Activated CD4-positive, alpha-beta memory T cell treated with anti-CD3 and anti-CD28 coated beads for 36 hours (primary cell): ENCODE measurements at regions of chr14 and their contacts with region 1.

Region 1: DNA sequence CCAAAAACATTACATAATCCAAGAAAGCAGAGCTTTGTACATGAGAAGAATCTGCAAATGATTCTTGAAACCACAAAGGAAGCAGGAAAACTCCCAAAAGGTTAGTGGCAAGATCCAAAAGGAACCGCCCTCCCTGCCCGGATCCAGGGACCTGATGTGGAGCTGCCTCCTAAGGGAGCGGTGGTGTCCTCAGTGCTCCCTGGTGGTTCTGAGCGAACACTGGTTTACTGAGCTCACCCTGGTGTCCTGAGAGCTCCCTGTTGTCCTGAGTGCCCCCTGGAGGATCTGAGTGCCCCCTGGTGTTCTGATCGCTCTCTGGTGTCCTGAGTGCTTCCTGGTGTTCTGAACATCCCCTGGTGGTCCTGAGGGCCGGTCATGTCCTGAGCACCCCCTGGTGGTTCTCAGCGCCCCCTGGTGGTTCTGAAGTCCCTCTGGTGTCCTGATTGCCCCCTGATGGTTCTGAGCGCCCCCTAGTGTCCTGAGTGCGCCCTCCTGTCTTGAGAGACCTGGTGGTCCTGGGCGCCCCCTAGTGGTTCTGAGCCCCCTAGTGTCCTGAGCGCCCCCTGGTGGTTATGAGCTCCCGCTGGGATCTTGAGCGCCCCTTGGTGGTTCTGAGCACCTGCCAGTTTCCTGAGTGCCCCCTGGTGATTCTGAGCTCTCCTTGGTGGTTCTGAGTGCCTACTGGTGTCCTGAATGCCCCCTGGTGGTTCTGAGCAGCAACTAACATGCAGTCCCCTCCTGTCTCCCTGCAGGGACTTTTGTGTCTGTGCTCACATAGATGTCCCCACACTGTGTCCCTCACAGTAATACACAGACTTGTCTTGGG is 891.1 kb downstream of the TMEM121 start:
- DNase-seq: peak; percentile 97
- H3K4me3 Mint-ChIP-seq: no peak overlapping the region
- H3K27ac Mint-ChIP-seq: no peak overlapping the region
- H3K4me1 Mint-ChIP-seq: peaks cover 8% of the 10 kb centered on the region
- H3K27me3 Mint-ChIP-seq: peaks cover 4% of the 10 kb centered on the region

Region 2: GRCh38 chr14:105690692-105691091 is 726.7 kb before region 1 on chr14:
- CTCF ChIA-PET with region 1: no interaction called
- POLR2A ChIA-PET with region 1: no interaction called
- intact Hi-C with region 1: no loop called
- DNase-seq: no peak
- H3K4me3 Mint-ChIP-seq: no peak overlapping the region
- H3K27ac Mint-ChIP-seq: no peak overlapping the region
- H3K4me1 Mint-ChIP-seq: peaks cover 4% of the 10 kb centered on the region
- H3K27me3 Mint-ChIP-seq: peaks cover 8% of the 10 kb centered on the region

Region 3: GRCh38 chr14:106308839-106309389 is 108.5 kb before region 1 on chr14:
- CTCF ChIA-PET with region 1: interaction called, 79 read pairs
- POLR2A ChIA-PET with region 1: no interaction called
- intact Hi-C with region 1: loop called (anchors 2 kb)
- DNase-seq: peak; percentile 97
- H3K4me3 Mint-ChIP-seq: no peak overlapping the region
- H3K27ac Mint-ChIP-seq: no peak overlapping the region
- H3K4me1 Mint-ChIP-seq: no peaks in the 10 kb centered on the region
- H3K27me3 Mint-ChIP-seq: peaks cover 10% of the 10 kb centered on the region

Region 4: DNA sequence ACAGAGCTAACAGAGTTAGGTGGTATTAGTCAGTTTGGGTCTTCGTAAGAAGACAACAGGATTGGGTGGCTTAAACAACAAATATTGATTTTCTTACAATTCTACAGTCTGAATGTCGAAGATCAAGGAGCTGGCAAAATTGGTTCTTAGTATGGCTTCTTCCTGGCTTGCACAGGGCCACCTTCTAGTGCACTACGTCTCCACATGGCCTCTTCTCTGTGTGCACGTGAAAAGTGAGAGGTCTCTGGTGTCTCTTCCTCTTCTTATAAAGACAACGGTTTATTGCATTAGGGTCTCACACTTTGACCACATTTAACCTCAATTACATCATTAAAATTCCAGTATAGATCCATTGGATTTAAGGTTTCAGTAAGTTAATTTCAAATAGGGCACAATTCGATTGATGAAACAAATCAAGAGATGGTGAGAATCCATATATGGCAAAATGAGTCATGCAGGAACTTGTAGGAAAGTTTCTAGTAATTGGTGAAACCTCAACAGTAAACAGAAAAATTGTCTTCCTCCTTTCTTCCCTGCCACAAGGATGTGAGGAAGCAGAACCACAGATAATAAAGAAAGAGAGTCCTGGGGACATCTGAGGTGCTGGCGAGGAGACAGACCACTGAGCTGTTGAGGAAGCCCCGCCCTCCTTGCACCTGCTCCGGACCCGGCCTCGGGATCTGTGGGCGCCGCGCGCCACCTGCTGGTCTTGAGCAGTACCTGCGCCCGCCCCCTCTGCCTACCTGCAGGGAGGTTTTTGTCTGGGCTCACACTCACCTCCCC is 44.4 kb before region 1 on chr14:
- CTCF ChIA-PET with region 1: interaction called, 220 read pairs
- POLR2A ChIA-PET with region 1: interaction called, 3 read pairs
- intact Hi-C with region 1: loop called (anchors 1 kb)
- DNase-seq: peak; percentile 90
- H3K4me3 Mint-ChIP-seq: peak overlapping the region; percentile 56
- H3K27ac Mint-ChIP-seq: peak overlapping the region; percentile 21
- H3K4me1 Mint-ChIP-seq: peaks cover 21% of the 10 kb centered on the region
- H3K27me3 Mint-ChIP-seq: peaks cover 12% of the 10 kb centered on the region

Region 5: GRCh38 chr14:106442857-106443256 is 25.4 kb after region 1 on chr14:
- CTCF ChIA-PET with region 1: interaction called, 83 read pairs
- POLR2A ChIA-PET with region 1: no interaction called
- intact Hi-C with region 1: no loop called
- DNase-seq: peak; percentile 61
- H3K4me3 Mint-ChIP-seq: no peak overlapping the region
- H3K27ac Mint-ChIP-seq: no peak overlapping the region
- H3K4me1 Mint-ChIP-seq: no peaks in the 10 kb centered on the region
- H3K27me3 Mint-ChIP-seq: peaks cover 35% of the 10 kb centered on the region

Region 6: DNA sequence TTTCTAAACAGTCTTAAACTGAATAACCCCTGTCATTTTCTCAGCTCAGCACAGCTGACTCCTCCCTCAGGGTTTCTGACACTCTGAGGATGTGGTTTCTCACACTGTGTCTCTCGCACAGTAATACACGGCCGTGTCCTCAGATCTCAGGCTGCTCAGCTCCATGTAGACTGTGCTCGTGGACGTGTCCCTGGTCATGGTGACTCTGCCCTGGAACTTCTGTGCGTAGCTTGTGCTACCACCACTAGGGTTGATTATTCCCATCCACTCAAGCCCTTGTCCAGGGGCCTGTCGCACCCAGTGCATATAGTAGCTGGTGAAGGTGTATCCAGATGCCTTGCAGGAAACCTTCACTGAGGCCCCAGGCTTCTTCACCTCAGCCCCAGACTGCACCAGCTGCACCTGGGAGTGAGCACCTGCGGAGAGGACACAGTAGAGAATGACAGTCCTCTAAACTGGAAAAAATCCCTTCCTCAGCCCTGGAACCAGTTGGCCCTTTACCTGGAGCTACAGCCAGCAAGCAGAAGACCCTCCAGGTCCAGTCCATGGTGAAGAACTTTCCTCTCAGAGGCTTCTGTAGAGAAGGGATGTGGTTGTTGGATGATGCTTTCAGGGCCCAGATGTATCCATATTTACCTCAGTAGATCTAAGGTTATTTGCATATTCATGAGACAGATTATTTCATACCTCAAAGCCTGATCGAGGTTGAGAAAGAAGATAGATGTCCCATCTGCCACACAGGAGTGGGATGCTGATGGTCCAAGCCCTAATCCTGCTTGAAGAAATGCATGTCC is 93.8 kb after region 1 on chr14:
- CTCF ChIA-PET with region 1: interaction called, 48 read pairs
- POLR2A ChIA-PET with region 1: no interaction called
- intact Hi-C with region 1: no loop called
- DNase-seq: peak; percentile 70
- H3K4me3 Mint-ChIP-seq: no peak overlapping the region
- H3K27ac Mint-ChIP-seq: peak overlapping the region; percentile 29
- H3K4me1 Mint-ChIP-seq: peaks cover 72% of the 10 kb centered on the region
- H3K27me3 Mint-ChIP-seq: no peaks in the 10 kb centered on the region

Region 7: DNA sequence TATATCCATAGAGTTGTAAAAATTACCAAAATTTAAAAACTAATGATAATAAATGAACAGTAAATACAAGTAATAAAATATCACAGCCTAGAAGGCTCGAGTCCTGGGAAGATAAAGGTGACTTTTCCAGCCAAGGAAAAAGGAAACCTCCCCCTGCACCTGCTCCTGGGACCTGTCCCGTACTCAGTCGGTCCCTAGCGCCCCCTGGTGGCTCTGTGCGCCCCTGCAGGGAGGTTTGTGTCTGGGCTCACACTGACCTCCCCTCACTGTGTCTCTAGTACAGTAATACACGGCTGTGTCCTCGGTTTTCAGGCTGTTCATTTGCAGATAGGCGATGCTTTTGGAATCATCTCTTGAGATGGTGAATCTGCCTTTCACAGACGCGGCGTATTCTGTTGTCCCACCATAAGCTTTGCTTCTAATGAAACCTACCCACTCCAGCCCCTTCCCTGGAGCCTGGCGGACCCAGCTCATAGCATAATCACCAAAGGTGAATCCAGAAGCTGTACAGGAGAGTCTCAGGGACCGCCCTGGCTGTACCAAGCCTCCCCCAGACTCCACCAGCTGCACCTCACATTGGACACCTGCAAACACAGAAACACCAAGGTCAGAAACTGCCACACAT is 139.3 kb after region 1 on chr14:
- CTCF ChIA-PET with region 1: interaction called, 12 read pairs
- POLR2A ChIA-PET with region 1: no interaction called
- intact Hi-C with region 1: no loop called
- DNase-seq: peak; percentile 84
- H3K4me3 Mint-ChIP-seq: no peak overlapping the region
- H3K27ac Mint-ChIP-seq: no peak overlapping the region
- H3K4me1 Mint-ChIP-seq: no peaks in the 10 kb centered on the region
- H3K27me3 Mint-ChIP-seq: peaks cover 18% of the 10 kb centered on the region